ENCODE measurements at regions of chr4 and their contacts with region 1.

Region 1: GRCh38 chr4:147866532-147867271 is 134.8 kb downstream of the ARHGAP10 start:
- DNase-seq: peak; percentile 96
- H3K4me3 Mint-ChIP-seq: no peak overlapping the region
- H3K27ac Mint-ChIP-seq: no peak overlapping the region
- H3K4me1 Mint-ChIP-seq: peaks cover 2% of the 10 kb centered on the region
- H3K27me3 Mint-ChIP-seq: no peaks in the 10 kb centered on the region

Region 2: GRCh38 chr4:147590249-147590920 is 276.3 kb before region 1 on chr4:
- CTCF ChIA-PET with region 1: interaction called, 65 read pairs
- DNase-seq: peak; percentile 61
- H3K4me3 Mint-ChIP-seq: no peak overlapping the region
- H3K27ac Mint-ChIP-seq: no peak overlapping the region
- H3K4me1 Mint-ChIP-seq: no peaks in the 10 kb centered on the region
- H3K27me3 Mint-ChIP-seq: no peaks in the 10 kb centered on the region

Region 3: GRCh38 chr4:147617173-147617840 is 249.4 kb before region 1 on chr4 and contains the start of gene TMEM184C:
- CTCF ChIA-PET with region 1: interaction called, 35 read pairs
- DNase-seq: peak; percentile 99
- H3K4me3 Mint-ChIP-seq: peak within 1 kb of the TSS; percentile 86
- H3K27ac Mint-ChIP-seq: peak within 1 kb of the TSS; percentile 97
- H3K4me1 Mint-ChIP-seq: peaks cover 35% of the 10 kb centered on the region
- H3K27me3 Mint-ChIP-seq: peaks cover 4% of the 10 kb centered on the region

Region 4: GRCh38 chr4:147707865-147708672 is 158.6 kb before region 1 on chr4:
- CTCF ChIA-PET with region 1: interaction called, 95 read pairs
- DNase-seq: peak; percentile 59
- H3K4me3 Mint-ChIP-seq: no peak overlapping the region
- H3K27ac Mint-ChIP-seq: no peak overlapping the region
- H3K4me1 Mint-ChIP-seq: peaks cover 5% of the 10 kb centered on the region
- H3K27me3 Mint-ChIP-seq: peaks cover 10% of the 10 kb centered on the region

Region 5: DNA sequence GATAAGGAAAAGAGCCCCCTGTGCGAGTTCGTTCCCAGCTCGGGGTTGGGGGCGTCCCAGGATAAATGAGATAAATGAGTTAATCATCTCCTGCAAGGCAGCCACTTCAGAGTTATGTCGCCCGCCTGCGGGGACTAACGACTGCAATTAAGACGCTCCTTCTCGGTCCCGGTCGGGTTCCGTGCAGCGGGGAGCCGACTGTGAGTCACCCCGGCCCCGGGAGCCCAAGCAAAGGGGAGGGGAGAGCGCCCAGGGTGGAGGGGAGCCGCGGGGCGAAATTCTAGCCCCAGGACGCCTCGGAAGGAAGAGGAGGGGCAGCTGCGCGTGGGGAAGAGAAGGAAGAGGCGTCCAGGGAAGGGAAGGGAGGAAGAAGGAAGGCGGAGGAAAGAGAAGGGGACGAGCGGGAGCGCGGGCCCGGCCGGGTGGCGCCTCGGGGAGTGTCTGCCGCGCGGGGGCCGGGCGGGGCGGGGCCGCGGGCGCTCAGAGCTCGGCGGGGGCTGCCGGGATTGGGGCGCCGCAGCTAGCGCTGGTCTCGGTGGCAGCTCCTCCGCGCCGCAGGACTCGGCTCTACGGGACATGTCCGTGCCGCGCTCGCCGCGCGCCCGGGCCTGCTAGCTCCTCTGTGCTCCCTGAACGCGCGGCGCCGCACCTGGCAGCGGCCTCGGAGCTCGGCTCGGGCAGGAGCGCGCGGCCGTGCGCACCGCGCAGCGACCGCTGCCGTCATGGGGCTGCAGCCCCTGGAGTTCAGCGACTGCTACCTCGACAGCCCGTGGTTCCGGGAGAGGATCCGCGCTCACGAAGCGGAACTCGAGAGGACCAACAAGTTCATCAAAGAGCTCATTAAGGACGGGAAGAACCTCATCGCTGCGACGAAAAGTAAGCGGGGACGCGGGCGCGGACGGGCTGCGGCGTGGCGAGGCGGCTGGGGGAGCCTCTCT is 134.9 kb before region 1 on chr4 and contains the start of gene ARHGAP10:
- CTCF ChIA-PET with region 1: interaction called, 32 read pairs
- DNase-seq: peak; percentile 69
- H3K4me3 Mint-ChIP-seq: peak within 1 kb of the TSS; percentile 85
- H3K27ac Mint-ChIP-seq: peak within 1 kb of the TSS; percentile 86
- H3K4me1 Mint-ChIP-seq: peaks cover 33% of the 10 kb centered on the region
- H3K27me3 Mint-ChIP-seq: peaks cover 39% of the 10 kb centered on the region

Region 6: DNA sequence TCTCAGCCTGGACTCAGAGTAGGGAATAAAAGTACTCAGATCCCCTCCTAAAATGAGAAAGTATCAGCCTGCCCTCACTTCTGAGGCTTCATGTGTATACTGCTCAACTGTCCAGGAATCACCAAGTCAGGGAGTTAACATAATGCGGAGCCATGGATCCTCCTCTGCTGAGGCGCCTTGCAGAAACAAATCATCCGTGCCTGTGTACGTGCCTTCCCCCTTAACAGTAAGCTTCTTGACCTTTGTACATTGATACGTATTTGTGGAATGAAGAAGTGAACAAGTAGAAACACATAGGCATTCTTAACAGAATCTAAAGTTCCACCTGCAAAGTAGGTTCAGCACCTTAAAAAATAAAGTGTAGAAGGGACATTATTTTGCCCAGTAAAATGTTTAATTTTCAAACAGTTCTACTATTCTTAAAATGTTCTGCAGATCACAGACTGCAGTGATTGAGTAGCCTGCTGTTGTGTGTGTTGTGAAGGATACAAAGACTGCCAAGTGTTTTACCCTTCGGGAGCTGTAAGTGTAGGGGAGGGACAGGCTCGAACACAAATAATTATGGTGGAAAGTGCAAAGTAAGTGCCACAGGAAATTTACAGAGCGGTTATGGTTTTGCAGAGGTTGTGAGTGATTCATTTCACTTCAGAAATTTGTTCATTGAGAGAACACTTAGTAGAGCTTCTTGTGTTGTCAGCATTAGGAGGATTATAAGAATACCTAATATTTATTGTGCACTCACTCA is 73.0 kb before region 1 on chr4:
- CTCF ChIA-PET with region 1: interaction called, 11 read pairs
- DNase-seq: no peak
- H3K4me3 Mint-ChIP-seq: no peak overlapping the region
- H3K27ac Mint-ChIP-seq: no peak overlapping the region
- H3K4me1 Mint-ChIP-seq: peaks cover 36% of the 10 kb centered on the region
- H3K27me3 Mint-ChIP-seq: no peaks in the 10 kb centered on the region

Region 7: DNA sequence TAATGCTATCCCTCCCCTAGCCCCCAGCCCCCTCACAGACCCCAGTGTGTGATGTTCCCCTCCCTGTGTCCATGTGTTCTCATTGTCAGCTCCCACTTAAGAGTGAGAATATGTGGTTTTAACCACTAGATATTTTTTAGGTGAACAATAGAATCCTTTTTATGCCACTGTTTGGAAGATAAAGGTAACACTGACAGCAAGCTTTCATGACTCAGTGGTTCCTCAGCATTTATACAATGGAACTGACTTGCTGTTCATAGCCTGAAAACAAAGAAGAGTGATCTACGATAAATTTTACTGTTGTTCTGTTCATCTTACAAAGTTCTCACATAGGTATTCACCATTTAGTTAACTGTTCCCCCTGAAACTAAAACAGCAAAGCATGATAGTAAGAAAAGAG is 13.0 kb after region 1 on chr4:
- CTCF ChIA-PET with region 1: interaction called, 16 read pairs
- DNase-seq: no peak
- H3K4me3 Mint-ChIP-seq: no peak overlapping the region
- H3K27ac Mint-ChIP-seq: no peak overlapping the region
- H3K4me1 Mint-ChIP-seq: no peaks in the 10 kb centered on the region
- H3K27me3 Mint-ChIP-seq: no peaks in the 10 kb centered on the region

Measured in activated naive CD4-positive, alpha-beta T cell treated with anti-CD3 and anti-CD28 coated beads, Interleukin-2, amount 10 ng/mL, durations not matched to agents 7 days and 5 days (primary cell).